Activated CD8-positive, alpha-beta T cell treated with anti-CD3 and anti-CD28 coated beads, Interleukin-2, amount 10 ng/mL, durations not matched to agents 7 days and 5 days (primary cell): ENCODE measurements at regions of chr7 and their contacts with region 1.

Region 1: GRCh38 chr7:100428199-100428966 is at the start of gene ZCWPW1:
- DNase-seq: peak; percentile 97
- ATAC-seq: peak; percentile 68
- H3K4me3 Mint-ChIP-seq: peak within 1 kb of the TSS; percentile 98
- H3K27ac Mint-ChIP-seq: peak within 1 kb of the TSS; percentile 100
- H3K4me1 Mint-ChIP-seq: peaks cover 36% of the 10 kb centered on the region
- H3K27me3 Mint-ChIP-seq: peaks cover 6% of the 10 kb centered on the region
- total RNA-seq, gene ZCWPW1: 2.6 to 2.8 TPM

Region 2: DNA sequence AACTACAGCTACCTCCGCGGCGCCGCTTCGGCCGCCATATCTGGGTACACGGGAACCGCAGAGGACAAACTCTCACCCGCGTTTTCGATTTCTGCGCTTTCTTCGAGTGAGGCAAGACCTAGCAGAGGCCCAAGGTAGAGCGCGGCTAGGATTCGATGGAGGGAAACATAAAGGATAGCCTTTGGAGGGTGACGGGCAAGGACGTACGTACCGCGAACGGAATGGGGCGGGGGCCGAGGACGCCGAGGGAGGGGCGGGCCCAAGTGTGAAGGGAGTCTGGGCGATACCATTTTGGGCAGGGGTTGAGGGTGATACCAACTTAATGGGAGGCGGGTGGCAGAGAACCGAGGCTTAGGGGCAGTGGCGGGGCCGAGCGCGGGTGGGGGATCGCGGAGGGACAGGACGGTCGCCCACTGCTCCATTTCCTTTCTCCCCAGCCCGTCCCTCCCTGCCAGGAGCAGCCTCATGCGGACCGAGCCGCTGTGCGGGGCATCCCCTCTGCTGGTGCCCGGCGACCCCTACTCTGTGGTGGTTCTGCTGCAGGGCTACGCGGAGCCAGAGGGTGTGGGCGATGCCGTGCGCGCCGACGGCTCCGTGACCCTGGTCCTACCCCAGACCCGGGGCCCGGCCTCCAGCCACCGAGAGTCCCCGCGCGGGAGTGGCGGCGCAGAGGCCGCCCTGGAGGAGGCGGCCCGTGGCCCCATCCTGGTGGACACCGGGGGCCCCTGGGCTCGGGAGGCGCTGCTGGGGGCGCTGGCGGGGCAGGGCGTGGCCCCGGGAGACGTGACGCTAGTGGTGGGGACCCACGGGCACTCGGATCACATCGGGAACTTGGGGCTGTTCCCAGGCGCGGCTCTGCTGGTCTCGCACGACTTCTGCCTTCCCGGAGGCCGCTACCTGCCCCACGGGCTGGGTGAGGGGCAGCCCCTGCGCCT is 301.2 kb before region 1 on chr7 and contains the start of gene MBLAC1:
- CTCF ChIA-PET with region 1: interaction called, 5 read pairs
- POLR2A ChIA-PET with region 1: interaction called, 10 read pairs
- DNase-seq: peak; percentile 95
- ATAC-seq: peak; percentile 72
- H3K4me3 Mint-ChIP-seq: peak within 1 kb of the TSS; percentile 98
- H3K27ac Mint-ChIP-seq: peak within 1 kb of the TSS; percentile 100
- H3K4me1 Mint-ChIP-seq: peaks cover 49% of the 10 kb centered on the region
- H3K27me3 Mint-ChIP-seq: no peaks in the 10 kb centered on the region
- total RNA-seq, gene MBLAC1: 4.3 to 5.7 TPM

Region 3: GRCh38 chr7:100444311-100445278 is 16.2 kb after region 1 on chr7:
- CTCF ChIA-PET with region 1: interaction called, 4 read pairs
- POLR2A ChIA-PET with region 1: interaction called, 15 read pairs
- DNase-seq: no peak
- ATAC-seq: peak; percentile 60
- H3K4me3 Mint-ChIP-seq: peak overlapping the region; percentile 22
- H3K27ac Mint-ChIP-seq: peak overlapping the region; percentile 81
- H3K4me1 Mint-ChIP-seq: peaks cover 29% of the 10 kb centered on the region
- H3K27me3 Mint-ChIP-seq: no peaks in the 10 kb centered on the region

Region 4: GRCh38 chr7:100781255-100781654 is 352.9 kb after region 1 on chr7:
- CTCF ChIA-PET with region 1: no interaction called
- POLR2A ChIA-PET with region 1: no interaction called
- DNase-seq: no peak
- ATAC-seq: no peak
- H3K4me3 Mint-ChIP-seq: no peak overlapping the region
- H3K27ac Mint-ChIP-seq: no peak overlapping the region
- H3K4me1 Mint-ChIP-seq: peaks cover 2% of the 10 kb centered on the region
- H3K27me3 Mint-ChIP-seq: no peaks in the 10 kb centered on the region